ENCODE measurements at regions of chr19 and their contacts with region 1.

Region 1: DNA sequence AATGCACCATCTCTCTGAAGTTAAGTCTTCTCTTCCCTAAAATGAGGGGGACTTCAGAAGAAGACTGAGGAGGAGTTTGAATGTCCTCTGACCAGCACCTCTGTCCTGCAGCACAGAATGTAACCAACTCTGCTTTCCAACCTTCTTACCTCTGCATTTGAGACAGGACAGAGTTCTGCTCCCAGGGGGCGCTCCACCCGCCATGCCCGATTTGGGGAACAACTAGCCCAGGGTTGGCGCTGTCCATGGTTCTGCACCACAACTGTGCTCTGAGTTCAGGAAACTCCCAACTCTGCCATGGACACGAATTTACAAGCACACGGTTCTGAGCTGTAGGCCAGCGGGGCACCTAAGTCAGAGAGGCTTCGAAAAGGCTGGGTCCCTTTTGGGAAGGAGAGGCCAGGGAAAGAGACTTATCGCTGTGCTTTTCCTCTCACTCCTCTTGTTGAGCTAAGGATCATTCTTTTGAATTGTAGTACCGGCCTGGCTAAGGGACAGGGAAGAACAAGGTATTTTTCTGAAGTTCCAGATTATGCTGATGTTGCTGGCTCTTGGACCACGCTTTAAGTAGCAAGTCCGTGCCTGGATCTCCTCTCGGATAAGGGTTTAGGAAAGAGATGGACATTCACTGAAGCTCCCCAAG is 22.2 kb downstream of the SIGLEC5 start:
- DNase-seq: peak; percentile 69 to 89 (median 80)
- ATAC-seq: peak in 3 of 4 donors; percentile 65 to 83 (median 74)
- H3K4me3 ChIP-seq: no peak overlapping the region
- H3K27ac ChIP-seq: no peak overlapping the region
- H3K4me1 ChIP-seq: no peaks in the 10 kb centered on the region
- H3K27me3 ChIP-seq: peaks cover 0 to 16% (median 1%) of the 10 kb centered on the region in 9 donors
- CTCF ChIP-seq: peak; percentile 28 to 62 (median 48)
- POLR2A ChIP-seq: no peak

Region 2: GRCh38 chr19:51651216-51651846 is 43.3 kb after region 1 on chr19:
- intact Hi-C with region 1: loop called in 1 of 10 experiments (anchors 10 kb)
- DNase-seq: peak in 2 of 5 donors; percentile 31 to 32
- ATAC-seq: peak in 3 of 4 donors; percentile 28 to 78 (median 28)
- H3K4me3 ChIP-seq: no peak overlapping the region
- H3K27ac ChIP-seq: peak overlapping the region in 1 of 12 donors; percentile 12
- H3K4me1 ChIP-seq: peaks cover 0 to 23% (median 0%) of the 10 kb centered on the region in 12 donors
- H3K27me3 ChIP-seq: peaks cover 0 to 29% (median 0%) of the 10 kb centered on the region in 9 donors
- CTCF ChIP-seq: no peak
- POLR2A ChIP-seq: no peak